ENCODE measurements at regions of chr3 and their contacts with region 1.

Region 1: DNA sequence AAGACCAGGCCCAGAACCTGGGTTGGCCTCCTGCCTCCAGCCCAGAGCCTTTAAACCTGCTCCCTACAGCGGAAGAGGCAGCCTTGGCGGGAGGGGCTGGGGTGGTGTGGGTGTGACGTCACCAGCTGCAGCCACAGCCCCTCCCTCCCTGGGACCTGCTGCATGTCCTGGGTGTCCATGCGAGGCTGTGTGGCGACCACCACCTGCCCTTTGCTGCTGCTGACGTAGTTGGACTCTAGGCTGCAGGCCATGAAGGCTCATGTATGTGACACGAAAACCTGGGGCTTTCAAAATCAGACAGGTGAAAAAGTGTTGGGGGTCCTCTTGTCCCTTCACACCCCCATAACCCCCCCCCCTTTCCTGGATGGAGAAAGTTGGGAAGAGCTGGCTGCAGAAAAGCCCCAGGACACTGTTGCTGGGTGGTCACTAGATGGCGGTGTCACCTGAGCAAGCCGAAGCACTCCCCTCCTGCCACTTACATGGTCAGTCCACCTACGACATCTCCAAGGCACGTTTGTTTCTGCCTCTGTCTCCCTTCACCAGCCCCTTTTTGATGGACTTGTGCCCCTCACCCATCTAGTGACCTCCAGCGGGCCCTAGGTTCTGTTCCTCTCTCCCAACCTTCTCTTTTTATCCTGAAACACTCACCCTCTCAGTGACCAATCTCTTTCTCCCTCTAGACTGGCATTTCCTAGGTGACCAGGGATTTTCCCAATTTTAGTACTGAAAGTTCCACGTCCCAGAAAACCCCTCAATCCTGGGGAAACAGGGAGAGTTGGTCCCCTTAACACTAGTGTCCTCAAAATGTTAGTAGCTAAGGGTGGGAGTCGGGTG is 35.2 kb downstream of the SLC6A20 start:
- DNase-seq: peak; percentile 37
- H3K4me3 ChIP-seq: no peak overlapping the region
- H3K27ac ChIP-seq: no peak overlapping the region
- H3K4me1 ChIP-seq: no peaks in the 10 kb centered on the region
- H3K27me3 ChIP-seq: no peaks in the 10 kb centered on the region
- CTCF ChIP-seq: peak; percentile 31 to 77 (median 64)
- POLR2A ChIP-seq: no peak

Region 2: DNA sequence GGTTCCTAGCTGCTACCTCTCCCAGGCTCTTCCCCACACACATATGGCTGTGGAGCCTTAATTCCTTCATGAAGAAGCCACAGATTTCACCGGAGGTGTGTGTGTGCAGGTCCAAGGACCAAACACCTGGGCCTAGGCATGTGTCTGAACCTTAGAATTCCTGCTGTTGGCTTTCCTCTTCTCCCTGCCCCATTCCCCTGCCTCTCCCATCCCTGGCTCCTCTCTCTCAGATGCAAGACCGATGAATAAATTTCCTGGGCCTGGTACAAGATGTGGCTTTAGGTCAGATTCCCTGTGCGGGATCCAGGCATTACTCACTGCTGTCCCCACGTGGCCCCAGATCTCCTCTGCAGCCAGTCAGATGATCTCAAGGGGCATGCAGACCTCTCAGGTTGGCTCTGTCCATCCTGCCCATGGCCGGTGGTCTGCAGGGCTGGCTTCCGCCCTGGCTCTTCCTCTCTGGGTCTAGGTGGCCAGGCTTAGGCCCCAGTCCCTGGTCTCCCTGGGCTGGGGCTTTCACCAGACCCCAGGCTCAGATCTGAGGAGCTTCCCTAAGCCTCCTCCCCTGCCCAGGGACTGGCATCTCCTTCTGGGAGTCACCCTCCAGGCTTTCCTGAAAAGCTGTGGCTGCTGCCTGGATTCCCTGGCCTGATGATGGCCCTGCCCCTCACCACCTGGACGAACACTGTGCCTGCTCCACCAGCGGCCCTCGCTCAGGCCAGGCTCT is 145.7 kb after region 1 on chr3:
- intact Hi-C with region 1: loop called (anchors 5 kb)
- DNase-seq: no peak
- H3K4me3 ChIP-seq: no peak overlapping the region
- H3K27ac ChIP-seq: no peak overlapping the region
- H3K4me1 ChIP-seq: no peaks in the 10 kb centered on the region
- H3K27me3 ChIP-seq: no peaks in the 10 kb centered on the region
- CTCF ChIP-seq: peak in 1 of 4 experiments; percentile 12
- POLR2A ChIP-seq: no peak

Region 3: GRCh38 chr3:45929042-45929679 is 168.1 kb after region 1 on chr3:
- intact Hi-C with region 1: loop called (anchors 5 kb)
- DNase-seq: no peak
- H3K4me3 ChIP-seq: no peak overlapping the region
- H3K27ac ChIP-seq: no peak overlapping the region
- H3K4me1 ChIP-seq: no peaks in the 10 kb centered on the region
- H3K27me3 ChIP-seq: no peaks in the 10 kb centered on the region
- CTCF ChIP-seq: peak in 3 of 4 experiments; percentile 40 to 65 (median 42)
- POLR2A ChIP-seq: no peak

Region 4: GRCh38 chr3:46078712-46079400 is 317.8 kb after region 1 on chr3:
- intact Hi-C with region 1: loop called (anchors 5 kb)
- DNase-seq: peak; percentile 93
- H3K4me3 ChIP-seq: no peak overlapping the region
- H3K27ac ChIP-seq: no peak overlapping the region
- H3K4me1 ChIP-seq: no peaks in the 10 kb centered on the region
- H3K27me3 ChIP-seq: no peaks in the 10 kb centered on the region
- CTCF ChIP-seq: peak; percentile 87 to 99 (median 99)
- POLR2A ChIP-seq: no peak

Measured in prostate gland (tissue), 2 donors.